Natural killer cell (primary cell): ENCODE measurements at regions of chr19 and their contacts with region 1.

Region 1: DNA sequence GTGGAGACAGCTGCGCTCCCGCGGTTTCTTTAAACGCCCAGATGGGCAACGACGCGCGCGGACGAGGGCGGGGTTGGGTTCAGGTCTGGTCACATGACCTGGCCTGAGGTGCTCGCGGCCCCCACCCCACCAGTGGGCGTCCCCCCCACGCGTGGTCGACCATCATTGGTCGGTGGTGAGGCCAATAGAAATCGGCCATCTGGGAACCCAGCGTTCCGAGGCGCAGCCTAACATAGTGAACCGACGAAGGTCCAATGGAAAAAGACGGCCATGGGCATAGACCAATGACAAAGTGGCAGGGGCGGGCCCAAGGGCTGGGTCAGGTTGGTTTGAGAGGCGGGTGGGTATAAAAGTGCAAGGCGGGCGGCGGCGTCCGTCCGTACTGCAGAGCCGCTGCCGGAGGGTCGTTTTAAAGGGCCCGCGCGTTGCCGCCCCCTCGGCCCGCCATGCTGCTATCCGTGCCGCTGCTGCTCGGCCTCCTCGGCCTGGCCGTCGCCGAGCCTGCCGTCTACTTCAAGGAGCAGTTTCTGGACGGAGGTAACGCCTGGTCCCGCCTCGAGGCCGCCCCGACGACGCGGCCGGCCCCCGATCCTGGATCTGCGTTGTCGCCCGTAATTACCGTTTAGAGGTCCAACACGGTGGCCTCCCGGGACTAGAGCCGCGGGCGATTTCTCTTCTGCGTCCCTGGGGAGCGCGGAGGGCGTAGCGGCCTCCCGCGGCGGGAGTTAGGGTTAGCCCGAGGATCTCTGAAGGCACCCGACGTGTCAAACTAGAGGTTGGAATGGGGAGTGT is at the start of gene CALR:
- DNase-seq: peak; percentile 99
- ATAC-seq: peak; percentile 84 to 96 (median 87)
- H3K4me3 ChIP-seq: peak within 1 kb of the TSS; percentile 85
- H3K4me3 Mint-ChIP-seq: peak within 1 kb of the TSS; percentile 96
- H3K27ac ChIP-seq: peak within 1 kb of the TSS; percentile 78
- H3K27ac Mint-ChIP-seq: peak within 1 kb of the TSS; percentile 96
- H3K4me1 ChIP-seq: peaks cover 59% of the 10 kb centered on the region
- H3K4me1 Mint-ChIP-seq: peaks cover 46 to 48% of the 10 kb centered on the region in 2 donors
- H3K27me3 ChIP-seq: no peaks in the 10 kb centered on the region
- H3K27me3 Mint-ChIP-seq: no peaks in the 10 kb centered on the region
- CTCF ChIP-seq: no peak
- total RNA-seq, gene CALR: 588 to 813 (median 763) TPM

Region 2: GRCh38 chr19:12757544-12758274 is 180.7 kb before region 1 on chr19:
- intact Hi-C with region 1: no loop called
- DNase-seq: peak; percentile 70 to 77
- ATAC-seq: peak; percentile 80 to 83 (median 82)
- H3K4me3 ChIP-seq: no peak overlapping the region
- H3K4me3 Mint-ChIP-seq: no peak overlapping the region
- H3K27ac ChIP-seq: no peak overlapping the region
- H3K27ac Mint-ChIP-seq: no peak overlapping the region
- H3K4me1 ChIP-seq: peaks cover 9% of the 10 kb centered on the region
- H3K4me1 Mint-ChIP-seq: peaks cover 0 to 5% of the 10 kb centered on the region in 2 donors
- H3K27me3 ChIP-seq: peaks cover 2% of the 10 kb centered on the region
- H3K27me3 Mint-ChIP-seq: peaks cover 0 to 9% of the 10 kb centered on the region in 2 donors
- CTCF ChIP-seq: peak; percentile 83

Region 3: GRCh38 chr19:12890787-12891552 is 47.5 kb before region 1 on chr19 and contains the start of gene GCDH:
- intact Hi-C with region 1: loop called (anchors 2 kb)
- DNase-seq: peak; percentile 91 to 98
- ATAC-seq: peak; percentile 91 to 98 (median 93)
- H3K4me3 ChIP-seq: peak within 1 kb of the TSS; percentile 87
- H3K4me3 Mint-ChIP-seq: peak within 1 kb of the TSS; percentile 96
- H3K27ac ChIP-seq: peak within 1 kb of the TSS; percentile 72
- H3K27ac Mint-ChIP-seq: peak within 1 kb of the TSS; percentile 90 to 93
- H3K4me1 ChIP-seq: peaks cover 21% of the 10 kb centered on the region
- H3K4me1 Mint-ChIP-seq: peaks cover 9 to 27% of the 10 kb centered on the region in 2 donors
- H3K27me3 ChIP-seq: no peaks in the 10 kb centered on the region
- H3K27me3 Mint-ChIP-seq: no peaks in the 10 kb centered on the region
- CTCF ChIP-seq: no peak
- total RNA-seq, gene GCDH: 35.9 to 41.7 (median 36.3) TPM

Region 4: GRCh38 chr19:12918271-12918670 is 20.2 kb before region 1 on chr19:
- intact Hi-C with region 1: loop called (anchors 2 kb)
- DNase-seq: no peak
- ATAC-seq: no peak
- H3K4me3 ChIP-seq: no peak overlapping the region
- H3K4me3 Mint-ChIP-seq: peak overlapping the region; percentile 85
- H3K27ac ChIP-seq: no peak overlapping the region
- H3K27ac Mint-ChIP-seq: peak overlapping the region; percentile 84 to 89
- H3K4me1 ChIP-seq: peaks cover 31% of the 10 kb centered on the region
- H3K4me1 Mint-ChIP-seq: peaks cover 17 to 26% of the 10 kb centered on the region in 2 donors
- H3K27me3 ChIP-seq: no peaks in the 10 kb centered on the region
- H3K27me3 Mint-ChIP-seq: no peaks in the 10 kb centered on the region
- CTCF ChIP-seq: no peak

Region 5: GRCh38 chr19:13044231-13044836 is 105.9 kb after region 1 on chr19:
- intact Hi-C with region 1: loop called (anchors 1 kb)
- DNase-seq: peak; percentile 79 to 83
- ATAC-seq: peak; percentile 83 to 93 (median 92)
- H3K4me3 ChIP-seq: no peak overlapping the region
- H3K4me3 Mint-ChIP-seq: peak overlapping the region; percentile 82
- H3K27ac ChIP-seq: peak overlapping the region; percentile 88
- H3K27ac Mint-ChIP-seq: peak overlapping the region; percentile 76 to 95
- H3K4me1 ChIP-seq: peaks cover 44% of the 10 kb centered on the region
- H3K4me1 Mint-ChIP-seq: peaks cover 33 to 42% of the 10 kb centered on the region in 2 donors
- H3K27me3 ChIP-seq: no peaks in the 10 kb centered on the region
- H3K27me3 Mint-ChIP-seq: peaks cover 0 to 11% of the 10 kb centered on the region in 2 donors
- CTCF ChIP-seq: no peak